PC-9 (cell line): ENCODE measurements at regions of chr16 and their contacts with region 1.

Region 1: GRCh38 chr16:53323924-53324323 is 110.3 kb upstream of the RBL2 start:
- DNase-seq: no peak
- H3K4me3 ChIP-seq: no peak overlapping the region
- H3K27ac ChIP-seq: no peak overlapping the region
- H3K4me1 ChIP-seq: no peaks in the 10 kb centered on the region
- H3K27me3 ChIP-seq: no peaks in the 10 kb centered on the region
- CTCF ChIP-seq: no peak

Region 2: DNA sequence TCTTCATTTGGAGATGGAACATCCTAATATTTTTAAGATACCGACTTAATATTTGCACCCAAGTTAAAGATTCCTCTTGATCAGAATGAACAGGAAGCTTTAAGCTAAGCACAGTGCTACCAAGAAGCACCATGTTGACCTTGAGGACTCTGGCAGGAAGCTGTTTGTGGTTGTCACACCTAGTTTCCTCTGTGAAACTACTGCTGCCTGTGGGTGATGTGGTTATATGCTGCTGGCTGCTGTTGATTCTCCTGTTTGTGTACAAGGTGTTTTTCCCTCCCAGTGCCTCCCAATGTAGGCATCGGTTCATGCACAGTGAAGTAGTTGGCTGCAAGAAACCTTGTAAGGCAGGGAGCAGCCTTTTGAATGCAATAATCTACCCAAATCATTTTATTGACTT is 133.7 kb after region 1 on chr16:
- CTCF ChIA-PET with region 1: no interaction called
- POLR2A ChIA-PET with region 1: no interaction called
- intact Hi-C with region 1: loop called (anchors 10 kb)
- DNase-seq: no peak
- H3K4me3 ChIP-seq: no peak overlapping the region
- H3K27ac ChIP-seq: no peak overlapping the region
- H3K4me1 ChIP-seq: no peaks in the 10 kb centered on the region
- H3K27me3 ChIP-seq: no peaks in the 10 kb centered on the region
- CTCF ChIP-seq: no peak